ENCODE measurements at regions of chr5 and their contacts with region 1.

Region 1: DNA sequence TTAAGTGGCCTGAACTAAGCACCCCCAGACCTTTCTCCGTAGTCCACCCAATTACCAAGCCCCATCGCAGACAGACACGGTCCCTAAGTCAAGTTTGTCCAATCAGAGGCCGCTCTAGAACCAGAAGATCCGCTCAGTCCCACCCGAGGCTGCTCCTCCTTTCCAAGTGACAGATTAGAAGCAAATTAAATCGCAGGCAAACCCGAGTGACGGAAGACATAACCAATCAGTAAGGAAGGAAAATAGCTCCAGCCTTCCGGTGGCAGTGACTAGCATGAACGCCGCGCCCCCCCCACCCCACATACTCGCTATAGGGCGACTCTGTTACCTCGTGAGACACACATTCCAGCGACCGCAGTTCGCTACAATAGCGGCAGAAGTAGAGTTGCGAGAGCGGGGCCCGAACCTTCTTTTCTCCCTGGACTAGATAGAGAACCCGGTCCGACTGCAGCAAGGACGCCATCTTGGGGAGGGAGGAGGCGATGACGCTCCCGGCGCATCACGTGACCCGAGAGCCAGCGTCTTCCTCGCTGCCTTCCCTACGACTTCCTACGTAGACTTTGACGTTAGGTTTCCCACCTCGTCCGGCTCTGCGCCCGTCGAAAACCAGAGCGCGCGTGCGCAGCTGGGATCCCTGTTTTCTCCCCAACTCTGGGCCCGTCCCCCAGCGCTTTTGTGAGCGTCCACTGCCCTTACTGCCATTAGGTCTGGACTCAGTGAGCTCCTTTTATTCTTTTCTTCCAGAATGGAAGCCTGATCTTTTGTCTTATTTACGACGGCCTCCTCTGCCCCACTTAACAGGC is at the start of gene DCTN4:
- DNase-seq: peak; percentile 98
- H3K4me3 ChIP-seq: peak within 1 kb of the TSS; percentile 59 to 96 (median 86)
- H3K4me3 Mint-ChIP-seq: no peak within 1 kb of the TSS
- H3K27ac ChIP-seq: peak within 1 kb of the TSS; percentile 89 to 98
- H3K27ac Mint-ChIP-seq: peak within 1 kb of the TSS in 1 of 7 donors; percentile 7
- H3K4me1 ChIP-seq: peaks cover 55 to 60% of the 10 kb centered on the region in 2 donors
- H3K4me1 Mint-ChIP-seq: peaks cover 40% of the 10 kb centered on the region
- H3K27me3 ChIP-seq: no peaks in the 10 kb centered on the region
- H3K27me3 Mint-ChIP-seq: peaks cover 0 to 1% (median 0%) of the 10 kb centered on the region in 3 donors
- CTCF ChIP-seq: no peak
- polyA plus RNA-seq, gene DCTN4: 14.6 to 34.4 (median 16.3) TPM

Region 2: GRCh38 chr5:150066901-150067396 is 691.8 kb before region 1 on chr5:
- intact Hi-C with region 1: loop called in 1 of 2 experiments (anchors 10 kb)
- DNase-seq: peak; percentile 45 to 80 (median 74)
- H3K4me3 ChIP-seq: peak overlapping the region in 1 of 3 experiments; percentile 4
- H3K4me3 Mint-ChIP-seq: no peak overlapping the region
- H3K27ac ChIP-seq: peak overlapping the region; percentile 52 to 80
- H3K27ac Mint-ChIP-seq: peak overlapping the region; percentile 81 to 94 (median 90)
- H3K4me1 ChIP-seq: peaks cover 73 to 76% of the 10 kb centered on the region in 2 donors
- H3K4me1 Mint-ChIP-seq: peaks cover 73% of the 10 kb centered on the region
- H3K27me3 ChIP-seq: no peaks in the 10 kb centered on the region
- H3K27me3 Mint-ChIP-seq: peaks cover 0 to 2% (median 0%) of the 10 kb centered on the region in 3 donors
- CTCF ChIP-seq: no peak

Region 3: DNA sequence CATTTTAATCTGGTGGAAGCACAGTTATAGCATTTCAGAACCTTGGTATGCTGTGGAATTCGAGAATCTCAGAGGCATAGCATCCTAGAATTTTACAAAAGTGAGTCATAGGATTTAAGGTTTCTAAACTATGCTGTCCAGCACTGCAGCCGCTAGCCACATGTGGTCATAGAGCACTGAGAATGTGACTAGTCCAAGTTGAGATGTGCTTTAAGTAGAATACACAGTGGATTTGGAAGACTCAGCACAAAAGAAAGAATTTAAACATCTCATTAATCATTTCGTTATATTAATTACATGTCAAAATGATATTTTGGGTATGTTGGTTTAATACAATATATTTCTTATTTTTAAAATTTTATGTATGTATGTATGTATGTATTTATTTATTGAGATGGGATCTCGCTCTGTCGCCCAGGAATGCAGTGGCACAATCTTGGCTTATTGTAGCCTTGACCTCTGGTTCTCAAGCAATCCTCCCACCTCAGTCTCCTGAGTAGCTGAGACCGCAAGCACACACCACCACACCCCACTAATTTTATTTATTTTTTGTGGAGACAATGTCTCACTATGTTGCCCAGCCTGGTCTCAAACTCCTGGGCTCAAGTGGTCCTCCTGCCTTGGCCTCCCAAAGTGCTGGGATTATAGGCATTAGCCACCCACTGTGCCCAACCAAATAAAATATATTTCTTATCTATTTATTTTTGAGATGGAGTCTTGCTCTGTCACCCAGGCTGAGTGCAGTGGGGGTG is 288.8 kb before region 1 on chr5:
- intact Hi-C with region 1: loop called in 1 of 2 experiments (anchors 10 kb)
- DNase-seq: no peak
- H3K4me3 ChIP-seq: no peak overlapping the region
- H3K4me3 Mint-ChIP-seq: no peak overlapping the region
- H3K27ac ChIP-seq: no peak overlapping the region
- H3K27ac Mint-ChIP-seq: peak overlapping the region in 1 of 7 donors; percentile 63
- H3K4me1 ChIP-seq: peaks cover 8 to 9% of the 10 kb centered on the region in 2 donors
- H3K4me1 Mint-ChIP-seq: peaks cover 27% of the 10 kb centered on the region
- H3K27me3 ChIP-seq: no peaks in the 10 kb centered on the region
- H3K27me3 Mint-ChIP-seq: peaks cover 0 to 11% (median 3%) of the 10 kb centered on the region in 3 donors
- CTCF ChIP-seq: no peak

Region 4: GRCh38 chr5:150700594-150701293 is 58.0 kb before region 1 on chr5 and contains the start of gene RBM22:
- intact Hi-C with region 1: loop called in 1 of 2 experiments (anchors 10 kb)
- DNase-seq: peak; percentile 81 to 89 (median 88)
- H3K4me3 ChIP-seq: peak within 1 kb of the TSS; percentile 66 to 95 (median 88)
- H3K4me3 Mint-ChIP-seq: no peak within 1 kb of the TSS
- H3K27ac ChIP-seq: peak within 1 kb of the TSS; percentile 80 to 98
- H3K27ac Mint-ChIP-seq: no peak within 1 kb of the TSS
- H3K4me1 ChIP-seq: peaks cover 15 to 18% of the 10 kb centered on the region in 2 donors
- H3K4me1 Mint-ChIP-seq: peaks cover 13% of the 10 kb centered on the region
- H3K27me3 ChIP-seq: no peaks in the 10 kb centered on the region
- H3K27me3 Mint-ChIP-seq: no peaks in the 10 kb centered on the region
- CTCF ChIP-seq: peak; percentile 85
- polyA plus RNA-seq, gene RBM22: 37.9 to 68.4 (median 47.4) TPM

Region 5: GRCh38 chr5:150801117-150801927 is 42.6 kb after region 1 on chr5:
- intact Hi-C with region 1: no loop called
- DNase-seq: peak in 2 of 3 donors; percentile 43 to 52
- H3K4me3 ChIP-seq: peak overlapping the region; percentile 29 to 67 (median 43)
- H3K4me3 Mint-ChIP-seq: peak overlapping the region; percentile 66 to 87
- H3K27ac ChIP-seq: peak overlapping the region in 1 of 2 donors; percentile 31
- H3K27ac Mint-ChIP-seq: peak overlapping the region in 4 of 7 donors; percentile 23 to 54 (median 39)
- H3K4me1 ChIP-seq: peaks cover 8 to 11% of the 10 kb centered on the region in 2 donors
- H3K4me1 Mint-ChIP-seq: peaks cover 13% of the 10 kb centered on the region
- H3K27me3 ChIP-seq: no peaks in the 10 kb centered on the region
- H3K27me3 Mint-ChIP-seq: peaks cover 0 to 3% (median 0%) of the 10 kb centered on the region in 3 donors
- CTCF ChIP-seq: peak; percentile 74